Activated T-helper 1 cell treated with anti-CD3 and anti-CD28 coated beads, Interleukin-12 subunit alpha, Interleukin-12 subunit beta, Interleukin-2, Interleukin-4 antibody, amounts not matched to agents 30 ng/mL and 10 ng/mL and 1 ng/mL, durations not matched to agents 14 hours and 24 hours and 36 hours (primary cell): ENCODE measurements at regions of chr5 and their contacts with region 1.

Region 1: DNA sequence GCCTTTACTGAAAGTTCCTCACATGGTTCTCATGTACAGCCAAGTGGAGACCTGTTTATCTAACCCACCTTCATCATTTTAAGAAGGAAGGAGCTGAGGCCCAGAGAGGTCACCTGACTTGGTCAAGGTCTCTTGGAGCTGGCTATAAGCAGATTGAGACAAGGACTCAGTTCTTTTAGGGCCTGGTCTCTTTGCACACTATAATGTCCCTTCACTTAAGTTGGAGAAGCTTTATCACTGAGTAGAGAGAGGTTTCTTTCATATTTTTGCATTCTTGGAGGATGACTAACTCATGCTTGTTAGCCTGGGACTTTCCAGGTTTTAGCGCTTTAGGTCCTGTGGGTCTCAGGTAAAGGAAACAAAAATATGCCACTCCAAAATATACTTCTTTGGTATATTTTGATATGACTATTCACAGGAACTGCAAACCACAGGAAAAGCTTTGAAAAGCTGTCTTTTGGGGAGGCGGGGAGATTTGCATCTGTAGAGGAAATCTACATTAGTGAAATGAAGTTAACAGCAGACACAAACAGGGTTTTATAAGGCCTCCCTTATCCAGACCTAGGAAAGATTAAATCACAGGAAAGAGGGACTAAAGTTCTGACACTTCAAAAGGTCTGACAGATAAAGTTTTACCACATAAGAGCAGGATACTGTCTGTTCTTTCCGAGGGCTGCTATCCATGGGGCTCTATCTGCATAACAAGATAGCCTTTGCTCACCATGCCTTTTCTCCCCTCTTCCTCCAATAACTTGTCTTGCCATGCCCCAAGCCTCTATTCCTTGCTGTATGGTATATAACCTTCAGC is 95.8 kb upstream of the ANKRD55 start:
- DNase-seq: peak; percentile 59
- H3K4me3 Mint-ChIP-seq: peak overlapping the region; percentile 63
- H3K27ac Mint-ChIP-seq: peak overlapping the region; percentile 87
- H3K4me1 Mint-ChIP-seq: peaks cover 74% of the 10 kb centered on the region
- H3K27me3 Mint-ChIP-seq: no peaks in the 10 kb centered on the region

Region 2: GRCh38 chr5:54792611-54793404 is 1536.1 kb before region 1 on chr5:
- intact Hi-C with region 1: loop called (anchors 2 kb)
- DNase-seq: no peak
- H3K4me3 Mint-ChIP-seq: peak overlapping the region; percentile 32
- H3K27ac Mint-ChIP-seq: peak overlapping the region; percentile 91
- H3K4me1 Mint-ChIP-seq: peaks cover 47% of the 10 kb centered on the region
- H3K27me3 Mint-ChIP-seq: peaks cover 3% of the 10 kb centered on the region

Region 3: GRCh38 chr5:55763746-55764420 is 565.1 kb before region 1 on chr5:
- intact Hi-C with region 1: loop called (anchors 5 kb)
- DNase-seq: no peak
- H3K4me3 Mint-ChIP-seq: peak overlapping the region; percentile 64
- H3K27ac Mint-ChIP-seq: peak overlapping the region; percentile 61
- H3K4me1 Mint-ChIP-seq: peaks cover 36% of the 10 kb centered on the region
- H3K27me3 Mint-ChIP-seq: peaks cover 3% of the 10 kb centered on the region

Region 4: GRCh38 chr5:55777332-55777731 is 551.6 kb before region 1 on chr5:
- intact Hi-C with region 1: no loop called
- DNase-seq: no peak
- H3K4me3 Mint-ChIP-seq: no peak overlapping the region
- H3K27ac Mint-ChIP-seq: no peak overlapping the region
- H3K4me1 Mint-ChIP-seq: peaks cover 9% of the 10 kb centered on the region
- H3K27me3 Mint-ChIP-seq: peaks cover 15% of the 10 kb centered on the region

Region 5: GRCh38 chr5:55994574-55995333 is 334.2 kb before region 1 on chr5 and contains the start of gene IL6ST:
- intact Hi-C with region 1: loop called (anchors 1 kb)
- DNase-seq: peak; percentile 95
- H3K4me3 Mint-ChIP-seq: peak within 1 kb of the TSS; percentile 95
- H3K27ac Mint-ChIP-seq: peak within 1 kb of the TSS; percentile 95
- H3K4me1 Mint-ChIP-seq: peaks cover 66% of the 10 kb centered on the region
- H3K27me3 Mint-ChIP-seq: no peaks in the 10 kb centered on the region
- total RNA-seq, gene IL6ST: 85.8 and 86.1 TPM in 2 replicates

Region 6: GRCh38 chr5:56270568-56271392 is 58.2 kb before region 1 on chr5:
- intact Hi-C with region 1: loop called (anchors 1 kb)
- DNase-seq: peak; percentile 65
- H3K4me3 Mint-ChIP-seq: peak overlapping the region; percentile 48
- H3K27ac Mint-ChIP-seq: peak overlapping the region; percentile 46
- H3K4me1 Mint-ChIP-seq: peaks cover 21% of the 10 kb centered on the region
- H3K27me3 Mint-ChIP-seq: no peaks in the 10 kb centered on the region

Region 7: GRCh38 chr5:56501781-56502557 is 173.0 kb after region 1 on chr5:
- intact Hi-C with region 1: no loop called
- DNase-seq: no peak
- H3K4me3 Mint-ChIP-seq: no peak overlapping the region
- H3K27ac Mint-ChIP-seq: peak overlapping the region; percentile 27
- H3K4me1 Mint-ChIP-seq: peaks cover 10% of the 10 kb centered on the region
- H3K27me3 Mint-ChIP-seq: peaks cover under 1% of the 10 kb centered on the region

Region 8: DNA sequence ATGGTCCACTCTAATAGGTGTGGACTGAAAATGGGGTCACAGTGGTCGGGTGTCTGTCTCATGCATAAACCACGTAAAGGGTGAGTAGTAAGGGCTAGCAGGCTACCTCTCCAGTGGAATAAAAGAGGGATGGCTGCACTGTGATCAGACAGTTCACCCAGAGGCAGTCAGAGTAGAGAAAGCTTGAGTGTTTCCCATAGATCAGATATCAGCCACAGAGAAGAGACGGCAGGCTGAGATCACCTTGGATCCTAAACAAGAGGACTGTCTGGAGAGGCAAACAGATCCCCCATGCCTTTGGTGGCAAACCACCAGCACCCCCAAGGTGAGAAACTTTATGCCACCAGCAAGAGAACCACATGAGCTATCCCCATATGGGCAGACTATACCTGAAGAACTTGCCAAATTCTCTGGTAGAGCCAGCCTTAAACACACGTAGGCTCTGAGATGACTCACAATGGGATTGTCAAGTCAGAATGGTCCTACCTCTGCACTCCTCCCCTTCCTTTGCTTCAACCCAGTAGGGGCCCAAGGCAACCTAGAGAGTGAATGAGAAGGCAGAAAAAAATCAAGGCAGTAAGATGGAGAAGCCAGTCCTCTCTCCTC is 281.2 kb after region 1 on chr5:
- intact Hi-C with region 1: loop called (anchors 1 kb)
- DNase-seq: peak; percentile 49
- H3K4me3 Mint-ChIP-seq: peak overlapping the region; percentile 48
- H3K27ac Mint-ChIP-seq: peak overlapping the region; percentile 81
- H3K4me1 Mint-ChIP-seq: peaks cover 89% of the 10 kb centered on the region
- H3K27me3 Mint-ChIP-seq: peaks cover 3% of the 10 kb centered on the region

Region 9: DNA sequence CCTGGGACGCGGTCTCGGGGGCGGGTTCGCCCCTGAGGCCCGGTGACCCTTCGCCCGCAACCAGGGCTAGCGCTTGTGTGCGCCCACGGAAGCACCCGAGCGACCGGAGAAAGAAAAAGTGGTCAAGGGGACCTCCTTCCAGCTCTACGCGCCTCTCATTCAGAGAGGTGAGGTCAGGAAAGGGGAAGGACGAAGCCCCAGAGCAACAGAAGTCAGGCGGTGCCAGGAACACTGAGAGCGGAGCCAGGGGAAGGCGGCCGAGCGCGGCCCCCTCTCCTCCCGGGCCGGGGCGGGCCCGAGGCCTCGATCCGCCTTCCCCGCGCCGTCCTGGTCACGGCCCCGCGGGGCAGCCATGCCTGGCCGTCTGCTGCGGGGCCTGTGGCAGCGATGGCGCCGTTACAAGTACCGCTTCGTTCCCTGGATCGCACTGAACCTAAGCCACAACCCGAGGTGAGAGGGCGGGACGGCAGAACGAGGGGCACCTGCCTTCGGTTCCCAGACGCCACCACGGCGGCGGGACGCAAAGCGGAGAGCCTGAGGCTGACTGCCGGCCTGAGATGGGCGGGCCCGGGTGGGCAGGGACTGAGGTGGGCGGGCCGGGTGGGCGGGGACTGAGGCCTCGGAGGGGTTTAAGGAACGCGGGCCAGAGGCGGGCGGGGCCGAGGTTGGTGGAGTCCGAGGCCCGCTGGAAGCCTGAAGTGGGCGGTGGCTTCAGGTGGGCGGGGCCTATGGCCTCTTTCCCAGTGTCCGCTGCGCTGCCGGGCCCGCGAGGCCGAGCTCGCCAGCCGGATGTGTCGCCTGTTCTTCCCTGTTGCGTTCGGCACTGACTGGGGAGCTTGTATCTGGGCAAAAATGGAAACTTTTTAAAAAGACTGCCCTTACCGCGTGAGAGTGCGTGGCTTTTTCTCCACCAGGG is 580.6 kb after region 1 on chr5 and contains the start of gene SETD9:
- intact Hi-C with region 1: loop called (anchors 2 kb)
- DNase-seq: peak; percentile 90
- H3K4me3 Mint-ChIP-seq: peak within 1 kb of the TSS; percentile 90
- H3K27ac Mint-ChIP-seq: peak within 1 kb of the TSS; percentile 95
- H3K4me1 Mint-ChIP-seq: peaks cover 25% of the 10 kb centered on the region
- H3K27me3 Mint-ChIP-seq: peaks cover 19% of the 10 kb centered on the region
- total RNA-seq, gene SETD9: 13.6 and 14.9 TPM in 2 replicates